ENCODE measurements at regions of chr13 and their contacts with region 1.

Region 1: GRCh38 chr13:45404210-45404609 is 14.0 kb downstream of the SLC25A30 start:
- DNase-seq: no peak
- H3K4me3 ChIP-seq: no peak overlapping the region
- H3K27ac ChIP-seq: no peak overlapping the region
- H3K4me1 ChIP-seq: no peaks in the 10 kb centered on the region
- H3K27me3 ChIP-seq: peaks cover 2% of the 10 kb centered on the region
- CTCF ChIP-seq: no peak

Region 2: DNA sequence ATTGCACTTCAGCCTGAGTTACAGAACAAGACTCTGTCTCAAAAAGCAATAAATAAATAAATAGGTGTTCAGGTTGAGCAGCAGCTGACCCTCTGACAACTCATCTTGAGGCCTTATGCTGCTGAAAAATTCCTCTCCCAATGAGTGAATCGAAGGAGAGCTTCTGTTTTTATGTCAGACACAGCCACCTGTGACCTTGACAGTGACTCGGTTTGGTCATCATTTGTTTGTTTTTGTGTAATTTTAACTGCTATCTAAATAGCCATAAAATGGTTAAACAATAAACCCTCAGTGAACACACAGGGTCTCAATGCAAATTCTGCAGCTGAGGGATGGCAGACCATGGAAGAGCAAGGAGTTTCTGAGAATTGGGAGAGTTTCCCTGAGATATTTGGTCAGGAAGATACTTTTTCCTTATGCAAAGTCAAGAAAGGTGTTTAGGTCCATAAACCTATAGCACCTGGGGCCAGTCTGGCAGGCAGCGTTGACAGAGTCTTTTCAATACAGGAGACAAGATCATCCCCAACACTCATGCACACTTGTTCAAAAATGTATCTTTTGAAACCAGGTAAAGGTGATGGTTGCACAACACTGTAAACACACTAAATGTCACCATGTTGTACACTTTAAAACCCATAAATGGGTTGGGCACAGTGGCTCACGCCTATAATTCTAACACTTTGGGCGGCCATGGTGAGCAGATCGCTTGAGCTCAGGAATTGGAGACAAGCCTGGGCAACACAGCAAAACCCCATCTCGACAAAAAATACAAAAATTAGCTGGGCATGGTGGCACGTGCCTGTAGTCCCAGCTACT is 30.6 kb after region 1 on chr13:
- CTCF ChIA-PET with region 1: interaction called, 11 read pairs
- dilution Hi-C with region 1: no loop called
- in situ Hi-C with region 1: no loop called
- intact Hi-C with region 1: no loop called
- DNase-seq: no peak
- H3K4me3 ChIP-seq: no peak overlapping the region
- H3K27ac ChIP-seq: no peak overlapping the region
- H3K4me1 ChIP-seq: no peaks in the 10 kb centered on the region
- H3K27me3 ChIP-seq: no peaks in the 10 kb centered on the region
- CTCF ChIP-seq: no peak